ENCODE measurements at regions of chr19 and their contacts with region 1.

Region 1: GRCh38 chr19:11581740-11582139 is 4.3 kb upstream of the ACP5 start:
- DNase-seq: peak; percentile 93
- ATAC-seq: peak; percentile 85
- H3K4me3 ChIP-seq: peak overlapping the region in 4 of 5 experiments; percentile 8 to 58 (median 28)
- H3K4me3 Mint-ChIP-seq: peak overlapping the region; percentile 83
- H3K27ac ChIP-seq: peak overlapping the region; percentile 87 to 91
- H3K27ac Mint-ChIP-seq: peak overlapping the region; percentile 89
- H3K4me1 ChIP-seq: peaks cover 68 to 95% of the 10 kb centered on the region in 2 donors
- H3K4me1 Mint-ChIP-seq: peaks cover 67% of the 10 kb centered on the region
- H3K27me3 ChIP-seq: no peaks in the 10 kb centered on the region
- H3K27me3 Mint-ChIP-seq: no peaks in the 10 kb centered on the region
- CTCF ChIP-seq: no peak

Region 2: GRCh38 chr19:11422163-11423021 is 159.3 kb before region 1 on chr19:
- CTCF ChIA-PET with region 1: interaction called, 3 read pairs
- POLR2A ChIA-PET with region 1: no interaction called
- intact Hi-C with region 1: loop called (anchors 5 kb)
- DNase-seq: peak; percentile 92
- ATAC-seq: peak; percentile 85
- H3K4me3 ChIP-seq: peak overlapping the region in 4 of 5 experiments; percentile 40 to 57 (median 46)
- H3K4me3 Mint-ChIP-seq: peak overlapping the region; percentile 84
- H3K27ac ChIP-seq: peak overlapping the region in 1 of 2 donors; percentile 52
- H3K27ac Mint-ChIP-seq: peak overlapping the region; percentile 58
- H3K4me1 ChIP-seq: peaks cover 55 to 61% of the 10 kb centered on the region in 2 donors
- H3K4me1 Mint-ChIP-seq: peaks cover 52% of the 10 kb centered on the region
- H3K27me3 ChIP-seq: peaks cover 0 to 50% (median 24%) of the 10 kb centered on the region in 4 experiments
- H3K27me3 Mint-ChIP-seq: peaks cover 18% of the 10 kb centered on the region
- CTCF ChIP-seq: no peak

Region 3: DNA sequence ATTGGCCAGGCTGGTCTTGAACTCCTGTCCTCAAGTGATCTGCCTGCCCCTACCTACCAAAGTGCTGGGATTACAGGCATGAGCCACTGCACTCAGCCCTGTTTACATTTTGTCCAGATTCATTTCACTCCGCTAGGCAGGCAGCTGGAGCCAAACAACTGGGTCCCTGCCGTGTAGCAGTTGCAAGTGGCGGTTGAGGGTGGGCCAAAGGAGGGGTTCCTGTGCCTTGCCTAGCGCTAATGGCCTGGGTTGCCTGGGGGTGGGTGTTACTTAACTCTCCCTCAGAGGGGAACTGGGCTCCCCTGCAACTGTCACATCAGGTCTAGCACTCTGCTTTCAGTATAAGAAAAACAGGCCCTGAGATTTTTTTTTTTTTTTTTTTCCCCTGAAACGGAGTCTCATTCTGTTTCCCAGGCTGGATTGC is 11.7 kb before region 1 on chr19:
- CTCF ChIA-PET with region 1: interaction called, 61 read pairs
- POLR2A ChIA-PET with region 1: interaction called, 63 read pairs
- intact Hi-C with region 1: loop called (anchors 1 kb)
- DNase-seq: peak; percentile 45
- ATAC-seq: no peak
- H3K4me3 ChIP-seq: no peak overlapping the region
- H3K4me3 Mint-ChIP-seq: no peak overlapping the region
- H3K27ac ChIP-seq: peak overlapping the region in 1 of 2 donors; percentile 5
- H3K27ac Mint-ChIP-seq: peak overlapping the region; percentile 85
- H3K4me1 ChIP-seq: peaks cover 47 to 75% of the 10 kb centered on the region in 2 donors
- H3K4me1 Mint-ChIP-seq: peaks cover 49% of the 10 kb centered on the region
- H3K27me3 ChIP-seq: no peaks in the 10 kb centered on the region
- H3K27me3 Mint-ChIP-seq: no peaks in the 10 kb centered on the region
- CTCF ChIP-seq: no peak

Region 4: DNA sequence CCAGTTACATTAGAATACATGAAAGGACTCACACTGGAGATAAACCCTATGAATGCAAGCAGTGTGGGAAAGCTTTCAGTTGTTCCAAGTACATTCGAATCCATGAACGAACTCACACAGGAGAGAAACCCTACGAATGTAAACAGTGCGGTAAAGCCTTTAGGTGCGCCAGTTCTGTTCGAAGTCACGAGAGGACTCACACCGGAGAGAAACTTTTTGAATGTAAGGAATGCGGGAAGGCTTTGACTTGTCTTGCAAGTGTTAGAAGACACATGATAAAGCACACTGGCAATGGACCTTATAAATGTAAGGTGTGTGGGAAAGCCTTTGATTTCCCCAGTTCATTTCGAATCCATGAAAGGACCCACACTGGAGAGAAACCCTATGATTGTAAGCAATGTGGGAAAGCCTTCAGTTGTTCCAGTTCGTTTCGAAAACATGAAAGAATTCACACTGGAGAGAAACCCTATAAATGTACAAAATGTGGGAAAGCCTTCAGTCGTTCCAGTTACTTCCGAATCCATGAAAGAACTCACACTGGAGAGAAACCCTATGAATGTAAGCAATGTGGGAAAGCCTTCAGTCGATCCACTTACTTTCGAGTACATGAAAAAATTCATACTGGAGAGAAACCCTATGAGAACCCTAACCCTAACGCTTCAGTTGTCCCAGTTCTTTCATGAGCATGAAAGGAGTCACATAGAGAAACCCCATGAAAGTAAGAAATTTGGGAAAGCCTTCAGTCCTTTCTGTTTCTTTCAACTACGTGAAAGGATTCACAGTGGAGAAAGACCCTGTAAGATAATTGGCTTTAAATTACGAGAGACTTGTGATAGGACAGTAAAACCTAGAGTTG is 35.7 kb after region 1 on chr19:
- CTCF ChIA-PET with region 1: no interaction called
- POLR2A ChIA-PET with region 1: no interaction called
- intact Hi-C with region 1: no loop called
- DNase-seq: no peak
- ATAC-seq: no peak
- H3K4me3 ChIP-seq: no peak overlapping the region
- H3K4me3 Mint-ChIP-seq: no peak overlapping the region
- H3K27ac ChIP-seq: no peak overlapping the region
- H3K27ac Mint-ChIP-seq: no peak overlapping the region
- H3K4me1 ChIP-seq: no peaks in the 10 kb centered on the region
- H3K4me1 Mint-ChIP-seq: peaks cover 4% of the 10 kb centered on the region
- H3K27me3 ChIP-seq: no peaks in the 10 kb centered on the region
- H3K27me3 Mint-ChIP-seq: no peaks in the 10 kb centered on the region
- CTCF ChIP-seq: no peak